PC-3 (cell line): ENCODE measurements at regions of chr5 and their contacts with region 1.

Region 1: DNA sequence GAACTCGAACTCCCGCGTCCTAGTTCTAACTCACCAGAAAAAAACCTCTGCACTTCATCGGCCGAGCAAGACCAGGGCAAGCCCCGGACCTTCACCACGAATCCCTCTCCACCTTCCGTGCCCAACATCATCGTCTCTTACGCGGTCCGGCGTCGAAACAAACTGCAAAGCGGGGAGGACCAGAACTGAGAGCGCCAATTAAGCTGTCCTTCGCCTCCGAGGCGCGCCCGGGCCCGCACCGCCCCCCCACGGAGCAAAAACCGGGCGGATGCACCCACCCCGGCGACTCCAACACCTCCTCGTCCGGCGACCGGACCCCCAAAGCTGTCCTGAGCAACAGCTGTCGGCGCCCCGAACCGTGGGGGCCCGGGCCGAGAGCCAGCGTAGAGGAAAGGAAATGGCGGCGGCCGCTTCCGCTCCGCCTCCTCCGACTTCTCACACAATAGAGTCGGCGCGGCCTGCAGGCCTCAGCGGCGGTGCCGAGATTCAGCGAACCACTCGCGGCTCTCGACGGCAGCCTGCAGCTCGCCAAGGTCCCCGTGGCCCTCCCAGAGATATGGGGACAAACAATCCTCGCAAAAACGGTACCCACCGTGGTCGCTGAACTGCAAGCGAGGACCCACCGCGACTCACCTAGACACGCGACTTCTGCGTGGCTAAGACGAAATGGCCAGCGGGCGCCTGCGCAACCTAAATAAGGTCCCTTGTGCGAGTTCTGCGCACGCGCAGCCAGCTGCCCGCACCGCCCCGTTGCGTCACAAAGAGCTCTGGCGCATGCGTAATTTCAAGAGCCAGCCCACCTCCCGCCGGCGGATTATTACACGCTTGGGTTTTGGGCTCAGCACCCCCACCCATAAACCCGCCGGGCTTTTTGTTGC is at the start of gene HNRNPH1:
- DNase-seq: peak; percentile 95
- ATAC-seq: peak; percentile 55
- H3K4me3 ChIP-seq: peak within 1 kb of the TSS; percentile 98
- H3K27ac ChIP-seq: peak within 1 kb of the TSS; percentile 75
- H3K4me1 ChIP-seq: peaks cover 30% of the 10 kb centered on the region
- H3K27me3 ChIP-seq: no peaks in the 10 kb centered on the region
- CTCF ChIP-seq: no peak
- total RNA-seq, gene HNRNPH1: 533 and 610 TPM in 2 replicates

Region 2: GRCh38 chr5:179475208-179475751 is 148.0 kb before region 1 on chr5:
- CTCF ChIA-PET with region 1: no interaction called
- POLR2A ChIA-PET with region 1: no interaction called
- intact Hi-C with region 1: no loop called
- DNase-seq: no peak
- ATAC-seq: no peak
- H3K4me3 ChIP-seq: no peak overlapping the region
- H3K27ac ChIP-seq: no peak overlapping the region
- H3K4me1 ChIP-seq: no peaks in the 10 kb centered on the region
- H3K27me3 ChIP-seq: peaks cover 18% of the 10 kb centered on the region; the same call in 1 of the 2 replicates
- CTCF ChIP-seq: no peak

Region 3: DNA sequence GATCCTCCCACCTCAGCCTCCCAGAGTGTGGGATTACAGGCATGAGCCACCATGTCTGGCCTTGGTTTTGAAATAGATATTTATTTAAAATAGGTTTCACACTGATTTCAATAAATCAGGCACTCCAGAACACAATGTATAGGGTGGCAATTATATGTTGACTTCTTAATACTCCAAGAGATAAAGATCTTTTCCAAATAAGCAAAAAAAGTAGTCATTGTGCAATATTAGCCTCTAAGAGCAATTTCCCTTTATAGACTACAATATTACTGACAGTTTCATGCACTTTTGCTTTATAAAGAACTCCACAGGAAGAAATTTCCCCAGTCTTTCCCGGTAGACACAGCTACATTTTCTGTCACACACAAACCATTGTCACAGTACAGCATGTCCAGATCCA is 96.3 kb before region 1 on chr5:
- CTCF ChIA-PET with region 1: no interaction called
- POLR2A ChIA-PET with region 1: no interaction called
- intact Hi-C with region 1: no loop called
- DNase-seq: no peak
- ATAC-seq: no peak
- H3K4me3 ChIP-seq: no peak overlapping the region
- H3K27ac ChIP-seq: no peak overlapping the region
- H3K4me1 ChIP-seq: no peaks in the 10 kb centered on the region
- H3K27me3 ChIP-seq: no peaks in the 10 kb centered on the region
- CTCF ChIP-seq: no peak

Region 4: GRCh38 chr5:179559284-179560252 is 63.7 kb before region 1 on chr5:
- CTCF ChIA-PET with region 1: no interaction called
- POLR2A ChIA-PET with region 1: interaction called, 10 read pairs
- intact Hi-C with region 1: no loop called
- DNase-seq: peak; percentile 97
- ATAC-seq: peak; percentile 99
- H3K4me3 ChIP-seq: peak overlapping the region; percentile 97
- H3K27ac ChIP-seq: peak overlapping the region; percentile 66
- H3K4me1 ChIP-seq: 0 out of 2 replicates have a peak, but pooled peaks cover 6% of the 10 kb centered on the region
- H3K27me3 ChIP-seq: no peaks in the 10 kb centered on the region
- CTCF ChIP-seq: no peak

Region 5: GRCh38 chr5:179678223-179679013 is 55.2 kb after region 1 on chr5:
- CTCF ChIA-PET with region 1: no interaction called
- POLR2A ChIA-PET with region 1: interaction called, 11 read pairs
- intact Hi-C with region 1: no loop called
- DNase-seq: peak; percentile 91
- ATAC-seq: peak; percentile 90
- H3K4me3 ChIP-seq: peak overlapping the region; percentile 95
- H3K27ac ChIP-seq: peak overlapping the region; percentile 57
- H3K4me1 ChIP-seq: peaks cover 14% of the 10 kb centered on the region
- H3K27me3 ChIP-seq: no peaks in the 10 kb centered on the region
- CTCF ChIP-seq: no peak